Heart left ventricle (tissue), 16 donors: ENCODE measurements at regions of chr21 and their contacts with region 1.

Region 1: DNA sequence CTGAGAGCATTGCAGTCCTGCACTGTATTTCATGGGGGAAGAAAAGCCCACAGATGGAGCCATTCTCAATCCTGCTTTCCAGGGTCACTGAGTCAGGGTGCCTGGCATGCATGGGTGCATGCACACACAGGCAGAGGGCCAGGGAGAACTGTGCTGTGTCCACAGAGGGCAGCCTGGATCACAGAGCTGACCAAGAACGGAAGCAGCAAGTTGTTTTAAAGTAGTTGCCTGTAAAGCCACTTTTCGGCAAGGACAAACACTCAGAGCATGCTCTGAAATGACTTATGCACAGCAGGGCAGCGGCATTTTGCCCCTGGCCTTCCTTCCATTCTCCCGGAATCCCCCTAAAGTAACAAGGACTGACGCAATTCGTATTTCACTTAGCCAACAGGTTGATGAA is 3.6 kb downstream of the ERG start:
- DNase-seq: no peak
- ATAC-seq: peak in 3 of 4 donors; percentile 4 to 33 (median 24)
- H3K4me3 ChIP-seq: peak overlapping the region in 11 of 12 donors; percentile 28 to 65 (median 55)
- H3K27ac ChIP-seq: peak overlapping the region in 11 of 12 donors; percentile 2 to 88 (median 83)
- H3K4me1 ChIP-seq: peaks cover 0 to 39% (median 4%) of the 10 kb centered on the region in 12 donors
- H3K27me3 ChIP-seq: no peaks in the 10 kb centered on the region
- CTCF ChIP-seq: no peak
- POLR2A ChIP-seq: peak in 1 of 2 donors; percentile 16

Region 2: GRCh38 chr21:38380481-38381137 is 114.1 kb before region 1 on chr21:
- intact Hi-C with region 1: loop called in 2 of 10 experiments (anchors 10 kb)
- DNase-seq: no peak
- ATAC-seq: no peak
- H3K4me3 ChIP-seq: no peak overlapping the region
- H3K27ac ChIP-seq: peak overlapping the region in 1 of 12 donors; percentile 47
- H3K4me1 ChIP-seq: peaks cover 0 to 32% (median 5%) of the 10 kb centered on the region in 12 donors
- H3K27me3 ChIP-seq: no peaks in the 10 kb centered on the region
- CTCF ChIP-seq: peak in 3 of 12 donors; percentile 17 to 31 (median 30)
- POLR2A ChIP-seq: no peak

Region 3: GRCh38 chr21:38404168-38404567 is 90.5 kb before region 1 on chr21:
- intact Hi-C with region 1: loop called in 1 of 10 experiments (anchors 10 kb)
- DNase-seq: no peak
- ATAC-seq: no peak
- H3K4me3 ChIP-seq: no peak overlapping the region
- H3K27ac ChIP-seq: no peak overlapping the region
- H3K4me1 ChIP-seq: peaks cover 0 to 14% (median 0%) of the 10 kb centered on the region in 12 donors
- H3K27me3 ChIP-seq: no peaks in the 10 kb centered on the region
- CTCF ChIP-seq: no peak
- POLR2A ChIP-seq: no peak

Region 4: GRCh38 chr21:38438476-38438893 is 56.2 kb before region 1 on chr21:
- intact Hi-C with region 1: loop called in 1 of 10 experiments (anchors 10 kb)
- DNase-seq: peak; percentile 44 to 79 (median 59)
- ATAC-seq: peak; percentile 33 to 62 (median 60)
- H3K4me3 ChIP-seq: no peak overlapping the region
- H3K27ac ChIP-seq: no peak overlapping the region
- H3K4me1 ChIP-seq: peaks cover 3 to 57% (median 27%) of the 10 kb centered on the region in 12 donors
- H3K27me3 ChIP-seq: no peaks in the 10 kb centered on the region
- CTCF ChIP-seq: no peak
- POLR2A ChIP-seq: no peak

Region 5: GRCh38 chr21:38474124-38474523 is 20.6 kb before region 1 on chr21:
- intact Hi-C with region 1: loop called in 1 of 10 experiments (anchors 2 kb)
- DNase-seq: peak in 3 of 5 donors; percentile 31 to 56 (median 33)
- ATAC-seq: peak in 3 of 4 donors; percentile 31 to 57 (median 32)
- H3K4me3 ChIP-seq: no peak overlapping the region
- H3K27ac ChIP-seq: peak overlapping the region in 10 of 12 donors; percentile 17 to 82 (median 50)
- H3K4me1 ChIP-seq: peaks cover 0 to 72% (median 41%) of the 10 kb centered on the region in 12 donors
- H3K27me3 ChIP-seq: no peaks in the 10 kb centered on the region
- CTCF ChIP-seq: no peak
- POLR2A ChIP-seq: no peak